Naive thymus-derived CD4-positive, alpha-beta T cell (primary cell): ENCODE measurements at regions of chr3 and their contacts with region 1.

Region 1: GRCh38 chr3:26118165-26118564 is 328.3 kb downstream of the OXSM start:
- DNase-seq: no peak
- ATAC-seq: no peak
- H3K4me3 ChIP-seq: no peak overlapping the region
- H3K4me3 Mint-ChIP-seq: no peak overlapping the region
- H3K27ac ChIP-seq: no peak overlapping the region
- H3K27ac Mint-ChIP-seq: no peak overlapping the region
- H3K4me1 ChIP-seq: no peaks in the 10 kb centered on the region
- H3K4me1 Mint-ChIP-seq: no peaks in the 10 kb centered on the region
- H3K27me3 ChIP-seq: no peaks in the 10 kb centered on the region
- H3K27me3 Mint-ChIP-seq: peaks cover 0 to 10% (median 4%) of the 10 kb centered on the region in 5 donors

Region 2: GRCh38 chr3:26078539-26078938 is 39.6 kb before region 1 on chr3:
- CTCF ChIA-PET with region 1: no interaction called
- POLR2A ChIA-PET with region 1: no interaction called
- intact Hi-C with region 1: loop called in 1 of 2 experiments (anchors 1 kb)
- DNase-seq: no peak
- ATAC-seq: no peak
- H3K4me3 ChIP-seq: no peak overlapping the region
- H3K4me3 Mint-ChIP-seq: no peak overlapping the region
- H3K27ac ChIP-seq: no peak overlapping the region
- H3K27ac Mint-ChIP-seq: no peak overlapping the region
- H3K4me1 ChIP-seq: no peaks in the 10 kb centered on the region
- H3K4me1 Mint-ChIP-seq: no peaks in the 10 kb centered on the region
- H3K27me3 ChIP-seq: no peaks in the 10 kb centered on the region
- H3K27me3 Mint-ChIP-seq: peaks cover 0 to 8% (median 3%) of the 10 kb centered on the region in 5 donors

Region 3: GRCh38 chr3:26550413-26550812 is 432.2 kb after region 1 on chr3:
- CTCF ChIA-PET with region 1: no interaction called
- POLR2A ChIA-PET with region 1: no interaction called
- intact Hi-C with region 1: no loop called
- DNase-seq: no peak
- ATAC-seq: no peak
- H3K4me3 ChIP-seq: no peak overlapping the region
- H3K4me3 Mint-ChIP-seq: no peak overlapping the region
- H3K27ac ChIP-seq: no peak overlapping the region
- H3K27ac Mint-ChIP-seq: no peak overlapping the region
- H3K4me1 ChIP-seq: no peaks in the 10 kb centered on the region
- H3K4me1 Mint-ChIP-seq: no peaks in the 10 kb centered on the region
- H3K27me3 ChIP-seq: no peaks in the 10 kb centered on the region
- H3K27me3 Mint-ChIP-seq: no peaks in the 10 kb centered on the region